ENCODE measurements at regions of chr10 and their contacts with region 1.

Region 1: GRCh38 chr10:44864637-44865288 is 46.4 kb upstream of the TMEM72 start:
- DNase-seq: peak; percentile 92 to 96 (median 94)
- ATAC-seq: peak; percentile 97
- H3K4me3 ChIP-seq: peak overlapping the region in 1 of 2 donors; percentile 26
- H3K27ac ChIP-seq: peak overlapping the region; percentile 13 to 73 (median 68)
- H3K4me1 ChIP-seq: peaks cover 16% of the 10 kb centered on the region
- H3K27me3 ChIP-seq: no peaks in the 10 kb centered on the region
- CTCF ChIP-seq: peak; percentile 95 to 99 (median 98)
- POLR2A ChIP-seq: peak in 2 of 3 donors; percentile 4 to 32

Region 2: GRCh38 chr10:43671656-43672531 is 1192.9 kb before region 1 on chr10:
- intact Hi-C with region 1: loop called (anchors 5 kb)
- DNase-seq: peak; percentile 69 to 82 (median 77)
- ATAC-seq: peak; percentile 87
- H3K4me3 ChIP-seq: no peak overlapping the region
- H3K27ac ChIP-seq: no peak overlapping the region
- H3K4me1 ChIP-seq: peaks cover 3% of the 10 kb centered on the region
- H3K27me3 ChIP-seq: peaks cover 0 to 3% of the 10 kb centered on the region in 2 donors
- CTCF ChIP-seq: peak; percentile 71 to 92 (median 88)
- POLR2A ChIP-seq: no peak

Region 3: DNA sequence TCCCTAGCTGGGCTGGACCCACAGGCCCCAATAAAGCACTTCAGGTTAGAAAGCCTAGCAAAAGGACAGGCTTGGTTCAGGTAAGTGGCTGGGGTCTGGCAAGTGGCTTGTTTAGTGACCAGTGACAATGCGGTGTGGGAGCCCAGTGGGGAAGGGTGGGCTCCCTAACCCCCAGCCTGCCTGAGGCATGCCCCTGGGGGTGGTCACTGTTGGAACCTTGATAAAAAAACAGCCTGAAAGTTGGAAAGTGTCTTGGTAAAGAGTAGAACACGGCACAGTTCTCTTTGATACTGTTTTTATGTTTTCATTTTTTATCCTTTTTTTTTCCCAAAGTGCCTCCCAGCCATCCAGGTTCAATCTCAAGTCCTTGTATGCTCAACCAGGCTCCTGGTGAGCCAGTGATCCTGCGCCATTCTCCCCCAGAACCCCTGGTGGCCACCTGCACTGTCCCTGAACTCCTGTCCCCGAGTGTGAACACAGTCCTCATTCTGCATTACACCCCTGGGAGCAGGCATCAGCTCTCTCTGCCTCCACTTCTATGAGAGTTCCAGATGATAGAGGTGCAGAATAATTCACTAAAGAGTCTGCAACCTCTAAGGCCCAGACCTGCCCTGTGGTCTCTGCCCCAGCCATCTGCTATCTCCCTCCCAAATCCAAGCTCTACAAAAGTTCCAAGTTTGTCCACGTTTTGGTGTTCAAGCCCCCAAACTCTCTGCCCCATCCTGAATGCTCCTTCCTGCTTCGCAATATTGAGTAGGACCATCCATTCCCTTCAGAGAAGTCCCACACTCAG is 464.9 kb before region 1 on chr10:
- intact Hi-C with region 1: no loop called
- DNase-seq: no peak
- ATAC-seq: no peak
- H3K4me3 ChIP-seq: no peak overlapping the region
- H3K27ac ChIP-seq: no peak overlapping the region
- H3K4me1 ChIP-seq: peaks cover 8% of the 10 kb centered on the region
- H3K27me3 ChIP-seq: no peaks in the 10 kb centered on the region
- CTCF ChIP-seq: no peak
- POLR2A ChIP-seq: no peak

Measured in body of pancreas (tissue), 4 donors.